ENCODE measurements at regions of chr15 and their contacts with region 1.

Region 1: GRCh38 chr15:52227456-52227855 is 36.3 kb upstream of the GNB5 start:
- DNase-seq: peak; percentile 92
- H3K4me3 ChIP-seq: no peak overlapping the region
- H3K27ac ChIP-seq: peak overlapping the region; percentile 20
- H3K4me1 ChIP-seq: peaks cover 90% of the 10 kb centered on the region
- CTCF ChIP-seq: peak; percentile 83

Region 2: DNA sequence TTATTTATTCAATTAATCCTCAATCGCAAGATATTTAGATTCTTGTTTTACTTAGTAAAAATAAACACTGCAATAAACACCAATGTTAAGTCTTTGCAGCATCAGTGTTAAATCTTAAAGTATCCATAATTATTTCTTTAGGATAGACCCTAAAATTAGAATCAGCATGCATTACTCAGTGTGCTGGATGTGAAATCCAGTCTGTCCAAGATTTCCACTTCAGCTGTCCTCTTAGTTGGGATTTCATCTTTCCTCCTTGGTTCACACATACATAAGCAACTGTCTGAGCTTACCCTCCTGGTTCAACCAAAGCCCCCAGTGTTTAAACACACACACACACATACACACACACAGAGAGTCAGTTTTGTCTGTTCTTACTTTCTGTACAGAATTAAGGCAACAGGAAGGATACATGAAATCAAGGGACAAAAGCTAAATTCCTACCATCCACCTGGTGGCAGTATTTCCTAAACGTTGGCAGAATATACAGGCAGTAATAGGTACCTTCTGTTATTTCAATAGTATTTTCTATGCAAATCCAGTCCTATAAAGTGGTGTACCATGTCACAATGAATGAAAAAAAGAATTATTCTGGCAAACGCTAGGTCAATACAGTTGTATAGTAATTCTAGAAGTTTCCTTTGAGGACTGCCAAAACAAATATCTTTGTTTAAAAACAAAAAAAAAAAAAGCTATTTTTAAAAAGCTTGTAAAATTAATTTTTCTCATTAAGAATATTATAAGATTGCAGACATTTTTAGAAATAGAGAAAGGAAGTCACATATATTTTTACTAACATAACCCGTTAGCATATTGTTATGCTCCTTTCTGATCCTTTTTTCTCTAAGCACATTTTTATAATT is 577.6 kb before region 1 on chr15:
- CTCF ChIA-PET with region 1: no interaction called
- POLR2A ChIA-PET with region 1: no interaction called
- intact Hi-C with region 1: no loop called
- DNase-seq: peak; percentile 66
- H3K4me3 ChIP-seq: no peak overlapping the region
- H3K27ac ChIP-seq: no peak overlapping the region
- H3K4me1 ChIP-seq: peaks cover 4% of the 10 kb centered on the region
- CTCF ChIP-seq: peak; percentile 94

Region 3: DNA sequence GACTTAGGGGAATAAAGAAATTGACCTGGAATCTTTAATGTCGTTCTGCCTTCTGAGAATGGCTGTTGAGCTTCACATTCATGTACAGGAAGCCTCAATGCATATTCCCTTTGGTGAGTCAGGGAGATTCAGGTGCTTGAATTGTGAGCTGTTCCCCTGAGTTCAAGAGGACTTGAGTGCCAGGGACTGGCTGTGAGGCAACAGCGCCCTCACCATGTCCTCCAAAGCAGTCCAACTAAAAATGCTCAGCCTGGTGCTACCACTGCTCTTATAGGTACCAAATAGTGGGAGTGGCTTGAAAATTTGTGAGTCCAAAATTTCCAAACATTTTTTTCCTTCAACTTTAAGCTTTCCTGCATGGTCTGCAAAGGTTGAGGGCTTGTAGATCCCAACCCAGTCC is 310.0 kb before region 1 on chr15:
- CTCF ChIA-PET with region 1: no interaction called
- POLR2A ChIA-PET with region 1: no interaction called
- intact Hi-C with region 1: no loop called
- DNase-seq: peak; percentile 43
- H3K4me3 ChIP-seq: no peak overlapping the region
- H3K27ac ChIP-seq: no peak overlapping the region
- H3K4me1 ChIP-seq: no peaks in the 10 kb centered on the region
- CTCF ChIP-seq: peak; percentile 73

Region 4: GRCh38 chr15:51955504-51956101 is 271.9 kb before region 1 on chr15:
- CTCF ChIA-PET with region 1: no interaction called
- POLR2A ChIA-PET with region 1: no interaction called
- intact Hi-C with region 1: no loop called
- DNase-seq: no peak
- H3K4me3 ChIP-seq: no peak overlapping the region
- H3K27ac ChIP-seq: no peak overlapping the region
- H3K4me1 ChIP-seq: no peaks in the 10 kb centered on the region
- CTCF ChIP-seq: no peak

Region 5: GRCh38 chr15:52217186-52217585 is 10.3 kb before region 1 on chr15:
- CTCF ChIA-PET with region 1: interaction called, 10 read pairs
- POLR2A ChIA-PET with region 1: interaction called, 167 read pairs
- intact Hi-C with region 1: loop called (anchors 1 kb)
- DNase-seq: peak; percentile 81
- H3K4me3 ChIP-seq: no peak overlapping the region
- H3K27ac ChIP-seq: peak overlapping the region; percentile 97
- H3K4me1 ChIP-seq: peaks cover 49% of the 10 kb centered on the region
- CTCF ChIP-seq: peak; percentile 90

Region 6: DNA sequence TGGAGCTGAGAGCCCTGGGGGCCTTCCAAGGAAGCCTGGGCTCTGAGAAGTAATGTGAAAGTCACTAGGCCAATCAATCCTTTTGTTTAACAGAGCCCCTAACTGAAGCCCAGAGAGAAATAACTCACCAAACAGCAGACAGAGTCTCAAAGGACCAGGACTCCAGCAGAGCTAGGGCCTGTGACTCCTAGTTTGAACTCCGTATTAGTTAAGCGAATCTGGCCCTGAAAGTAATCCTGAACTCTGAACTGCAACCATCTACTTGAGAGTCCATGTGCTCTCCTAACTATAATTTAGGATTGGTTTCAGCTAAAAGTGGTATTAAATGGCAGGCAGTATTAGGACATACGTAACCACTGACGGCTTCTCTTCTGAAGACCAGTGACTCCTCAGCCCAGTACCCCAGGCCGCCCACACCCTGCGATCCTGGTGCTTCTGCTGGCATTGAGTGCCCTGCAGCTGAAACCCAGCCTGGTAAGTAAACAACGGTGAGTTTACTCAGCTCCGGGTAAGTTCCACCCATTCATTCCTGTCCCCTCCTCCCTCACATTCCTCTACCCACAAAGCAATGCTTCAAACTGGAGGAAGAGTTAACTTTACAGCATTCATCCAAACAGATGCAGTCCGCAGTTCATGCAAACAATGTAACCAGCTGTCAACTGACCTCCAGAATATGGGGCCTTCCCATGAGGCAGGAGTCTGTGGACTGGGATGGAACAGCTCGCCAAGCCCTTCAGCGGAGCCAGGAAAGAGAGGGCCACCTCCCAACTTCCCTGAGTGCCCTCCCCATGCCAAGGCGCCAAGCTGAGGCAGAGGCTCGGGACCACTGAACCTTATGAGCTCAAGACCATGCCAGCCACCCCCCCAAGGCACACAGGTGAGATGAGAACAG is 60.8 kb after region 1 on chr15:
- CTCF ChIA-PET with region 1: no interaction called
- POLR2A ChIA-PET with region 1: no interaction called
- intact Hi-C with region 1: no loop called
- DNase-seq: no peak
- H3K4me3 ChIP-seq: no peak overlapping the region
- H3K27ac ChIP-seq: no peak overlapping the region
- H3K4me1 ChIP-seq: no peaks in the 10 kb centered on the region
- CTCF ChIP-seq: no peak

Measured in OCI-LY7 (cell line).